GM12878 (cell line): ENCODE measurements at regions of chr18 and their contacts with region 1.

Region 1: DNA sequence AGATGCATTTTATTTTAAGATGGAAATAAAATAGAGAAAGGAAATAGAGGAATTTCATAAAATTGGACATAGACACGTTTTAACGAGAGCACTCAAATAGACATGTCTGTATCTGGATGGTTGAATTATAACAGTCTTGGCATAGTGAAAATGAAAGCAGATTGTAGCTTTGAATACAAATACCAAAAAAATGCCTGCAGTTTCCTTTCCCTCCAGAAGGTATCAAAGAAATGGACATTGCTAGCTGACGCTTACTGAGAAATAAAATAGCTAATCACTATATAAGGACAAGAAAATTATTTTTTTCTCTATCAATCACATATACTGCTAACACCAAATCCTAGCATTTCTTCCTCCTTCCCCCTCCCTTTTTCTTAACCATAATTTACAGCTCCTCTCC is 11.4 kb upstream of the MAPRE2 start:
- DNase-seq: no peak
- ATAC-seq: peak; percentile 87
- H3K4me3 ChIP-seq: peak overlapping the region; percentile 33; the same call in 1 of the 2 replicates
- H3K27ac ChIP-seq: peak overlapping the region; percentile 81
- H3K4me1 ChIP-seq: peaks cover 10% of the 10 kb centered on the region
- H3K27me3 ChIP-seq: no peaks in the 10 kb centered on the region
- CTCF ChIP-seq: peak in 2 of 3 experiments; percentile 15 to 16; a peak in 2 of 6 replicates
- EP300 ChIP-seq: no peak
- POLR2A ChIP-seq: no peak
- RAD21 ChIP-seq: no peak

Region 2: GRCh38 chr18:34993289-34993688 is 36.5 kb before region 1 on chr18:
- CTCF ChIA-PET with region 1: no interaction called
- POLR2A ChIA-PET with region 1: no interaction called
- RAD21 ChIA-PET with region 1: no interaction called
- SMC1A ChIA-PET with region 1: no interaction called
- in situ Hi-C with region 1: no loop called
- intact Hi-C with region 1: no loop called
- DNase-seq: no peak
- ATAC-seq: peak; percentile 34; the same call in 1 of the 3 replicates
- H3K4me3 ChIP-seq: no peak overlapping the region
- H3K27ac ChIP-seq: no peak overlapping the region
- H3K4me1 ChIP-seq: no peaks in the 10 kb centered on the region
- H3K27me3 ChIP-seq: no peaks in the 10 kb centered on the region
- CTCF ChIP-seq: no peak
- EP300 ChIP-seq: no peak
- POLR2A ChIP-seq: no peak
- RAD21 ChIP-seq: no peak

Region 3: GRCh38 chr18:35040988-35041814 is 11.4 kb after region 1 on chr18 and contains the start of gene MAPRE2:
- CTCF ChIA-PET with region 1: interaction called, 26 read pairs
- POLR2A ChIA-PET with region 1: interaction called, 49 read pairs
- RAD21 ChIA-PET with region 1: interaction called, 82 read pairs
- SMC1A ChIA-PET with region 1: interaction called, 61 read pairs
- in situ Hi-C with region 1: no loop called
- intact Hi-C with region 1: no loop called
- DNase-seq: peak; percentile 82
- ATAC-seq: peak; percentile 84
- H3K4me3 ChIP-seq: peak within 1 kb of the TSS; percentile 78
- H3K27ac ChIP-seq: peak within 1 kb of the TSS; percentile 66
- H3K4me1 ChIP-seq: peaks cover 12% of the 10 kb centered on the region; the same call in 1 of the 2 replicates
- H3K27me3 ChIP-seq: no peaks in the 10 kb centered on the region
- CTCF ChIP-seq: no peak
- EP300 ChIP-seq: peak in 1 of 2 experiments; percentile 43; a peak in 2 of 4 replicates
- POLR2A ChIP-seq: peak; percentile 99
- RAD21 ChIP-seq: no peak
- polyA plus RNA-seq, gene MAPRE2: 11.0 to 16.3 TPM

Region 4: GRCh38 chr18:35060122-35060815 is 30.5 kb after region 1 on chr18:
- CTCF ChIA-PET with region 1: interaction called, 10 read pairs
- POLR2A ChIA-PET with region 1: interaction called, 6 read pairs
- RAD21 ChIA-PET with region 1: interaction called, 4 read pairs
- SMC1A ChIA-PET with region 1: interaction called, 5 read pairs
- in situ Hi-C with region 1: no loop called
- intact Hi-C with region 1: no loop called
- DNase-seq: no peak
- ATAC-seq: no peak
- H3K4me3 ChIP-seq: no peak overlapping the region
- H3K27ac ChIP-seq: no peak overlapping the region
- H3K4me1 ChIP-seq: no peaks in the 10 kb centered on the region
- H3K27me3 ChIP-seq: no peaks in the 10 kb centered on the region
- CTCF ChIP-seq: no peak
- EP300 ChIP-seq: no peak
- POLR2A ChIP-seq: no peak
- RAD21 ChIP-seq: no peak

Region 5: DNA sequence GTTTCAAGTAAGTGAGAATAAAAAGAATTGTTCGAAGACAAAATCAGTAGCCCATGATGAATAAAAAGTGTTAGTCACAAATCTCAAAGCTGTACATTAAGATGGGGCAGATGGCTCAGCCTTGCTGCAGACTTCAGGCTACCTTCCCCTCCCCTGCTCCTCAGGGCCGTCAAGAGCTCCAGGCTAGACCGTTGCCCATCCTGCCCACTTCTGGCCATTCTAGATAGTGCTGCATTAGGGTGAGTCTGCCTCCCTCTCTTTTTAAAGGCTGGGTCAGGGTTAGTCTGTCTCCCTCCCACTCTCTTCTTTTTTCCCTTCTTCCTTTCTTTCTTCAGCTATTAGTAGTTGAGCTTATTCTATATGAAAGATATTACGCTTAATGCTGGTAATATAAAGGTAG is 97.4 kb after region 1 on chr18:
- CTCF ChIA-PET with region 1: interaction called, 16 read pairs
- POLR2A ChIA-PET with region 1: no interaction called
- RAD21 ChIA-PET with region 1: interaction called, 11 read pairs
- SMC1A ChIA-PET with region 1: interaction called, 14 read pairs
- in situ Hi-C with region 1: no loop called
- intact Hi-C with region 1: no loop called
- DNase-seq: no peak
- ATAC-seq: peak; percentile 58
- H3K4me3 ChIP-seq: no peak overlapping the region
- H3K27ac ChIP-seq: no peak overlapping the region
- H3K4me1 ChIP-seq: no peaks in the 10 kb centered on the region
- H3K27me3 ChIP-seq: no peaks in the 10 kb centered on the region
- CTCF ChIP-seq: peak in 2 of 3 experiments; percentile 14 to 23; a peak in 2 of 6 replicates
- EP300 ChIP-seq: no peak
- POLR2A ChIP-seq: no peak
- RAD21 ChIP-seq: peak; percentile 37; the same call in 1 of the 2 replicates

Region 6: DNA sequence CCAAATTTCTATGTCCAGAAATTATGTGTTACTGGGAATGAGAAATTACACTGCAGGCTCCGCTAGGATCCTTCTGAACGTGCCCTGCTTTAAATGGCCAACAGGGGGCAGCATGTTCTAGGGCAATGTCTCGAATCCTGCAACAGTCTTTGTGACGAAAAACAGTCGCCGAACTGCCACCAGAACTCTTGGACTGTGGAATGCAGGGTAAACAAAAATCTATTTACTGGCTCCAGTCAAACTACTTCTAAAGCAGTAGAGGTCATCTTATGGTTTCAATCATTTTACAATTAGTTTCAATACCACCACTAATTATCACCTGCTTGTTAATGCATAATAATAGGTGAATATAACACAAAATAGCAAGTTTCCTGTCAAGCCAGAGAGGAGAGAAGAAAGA is 201.3 kb after region 1 on chr18:
- CTCF ChIA-PET with region 1: interaction called, 20 read pairs
- POLR2A ChIA-PET with region 1: no interaction called
- RAD21 ChIA-PET with region 1: interaction called, 5 read pairs
- SMC1A ChIA-PET with region 1: interaction called, 6 read pairs
- in situ Hi-C with region 1: no loop called
- intact Hi-C with region 1: no loop called
- DNase-seq: peak; percentile 33
- ATAC-seq: peak; percentile 95
- H3K4me3 ChIP-seq: peak overlapping the region; percentile 37; the same call in 1 of the 2 replicates
- H3K27ac ChIP-seq: no peak overlapping the region
- H3K4me1 ChIP-seq: no peaks in the 10 kb centered on the region
- H3K27me3 ChIP-seq: no peaks in the 10 kb centered on the region
- CTCF ChIP-seq: peak; percentile 89 to 95 (median 89)
- EP300 ChIP-seq: no peak
- POLR2A ChIP-seq: no peak
- RAD21 ChIP-seq: peak; percentile 96

Region 7: GRCh38 chr18:35355140-35355618 is 325.4 kb after region 1 on chr18:
- CTCF ChIA-PET with region 1: interaction called, 13 read pairs
- POLR2A ChIA-PET with region 1: no interaction called
- RAD21 ChIA-PET with region 1: interaction called, 5 read pairs
- SMC1A ChIA-PET with region 1: interaction called, 4 read pairs
- in situ Hi-C with region 1: no loop called
- intact Hi-C with region 1: loop called (anchors 5 kb)
- DNase-seq: no peak
- ATAC-seq: peak; percentile 100
- H3K4me3 ChIP-seq: no peak overlapping the region
- H3K27ac ChIP-seq: no peak overlapping the region
- H3K4me1 ChIP-seq: no peaks in the 10 kb centered on the region
- H3K27me3 ChIP-seq: no peaks in the 10 kb centered on the region
- CTCF ChIP-seq: peak; percentile 73 to 76 (median 76)
- EP300 ChIP-seq: no peak
- POLR2A ChIP-seq: no peak
- RAD21 ChIP-seq: peak; percentile 67

Region 8: DNA sequence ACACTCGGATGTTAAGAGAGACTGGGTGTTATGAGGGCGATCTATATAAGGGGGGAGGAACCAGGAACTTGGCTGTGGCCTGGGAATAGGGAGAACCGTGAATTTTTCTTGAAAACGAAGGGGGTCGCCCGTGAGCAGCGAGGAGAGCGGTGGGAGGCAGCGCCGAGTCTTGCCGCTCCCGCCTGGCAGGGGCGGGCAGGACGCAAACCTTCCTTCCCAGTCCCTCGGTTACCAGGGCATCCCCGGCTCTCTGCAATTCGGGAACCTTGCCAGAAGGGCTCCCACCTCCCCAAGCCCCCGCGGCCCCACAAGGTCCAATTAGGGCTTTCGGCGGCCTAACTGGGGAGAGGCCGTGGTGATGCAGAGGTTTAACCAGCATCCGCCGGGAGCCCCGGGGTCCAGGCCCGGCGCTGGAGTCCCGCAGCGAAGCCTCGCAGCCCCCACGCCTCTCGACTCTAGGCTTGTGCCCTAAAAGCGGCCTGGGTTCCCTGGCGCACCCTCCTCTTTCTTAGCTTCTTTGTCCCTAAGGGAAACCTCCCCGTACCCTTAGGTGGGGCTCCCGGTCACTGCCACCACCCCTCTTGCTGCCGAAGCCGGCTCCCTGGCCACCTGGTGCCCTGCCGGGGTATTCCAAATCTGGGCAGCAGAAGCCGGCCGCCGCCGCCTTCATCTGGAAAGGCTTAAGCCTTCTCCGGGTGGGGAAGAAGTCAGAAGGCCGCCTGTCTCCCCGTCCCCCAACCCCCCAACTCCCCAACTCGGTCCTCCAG is 1267.1 kb after region 1 on chr18:
- CTCF ChIA-PET with region 1: no interaction called
- POLR2A ChIA-PET with region 1: no interaction called
- RAD21 ChIA-PET with region 1: no interaction called
- SMC1A ChIA-PET with region 1: no interaction called
- in situ Hi-C with region 1: no loop called
- intact Hi-C with region 1: no loop called
- DNase-seq: no peak
- ATAC-seq: peak; percentile 49
- H3K4me3 ChIP-seq: peak overlapping the region; percentile 69
- H3K27ac ChIP-seq: no peak overlapping the region
- H3K4me1 ChIP-seq: no peaks in the 10 kb centered on the region
- H3K27me3 ChIP-seq: peaks cover 0 to 4% of the 10 kb centered on the region in 2 experiments; a peak in 1 of 4 replicates
- CTCF ChIP-seq: peak; percentile 17 to 56 (median 34); a peak in 4 of 6 replicates
- EP300 ChIP-seq: no peak
- POLR2A ChIP-seq: no peak
- RAD21 ChIP-seq: peak; percentile 40; the same call in 1 of the 2 replicates